ENCODE measurements at regions of chr17 and their contacts with region 1.

Region 1: GRCh38 chr17:38557836-38558727 is 47.7 kb downstream of the SRCIN1 start:
- DNase-seq: peak; percentile 62
- H3K4me3 ChIP-seq: peak overlapping the region; percentile 52
- H3K27ac ChIP-seq: no peak overlapping the region
- H3K27me3 ChIP-seq: peaks cover 70% of the 10 kb centered on the region
- CTCF ChIP-seq: peak; percentile 93

Region 2: DNA sequence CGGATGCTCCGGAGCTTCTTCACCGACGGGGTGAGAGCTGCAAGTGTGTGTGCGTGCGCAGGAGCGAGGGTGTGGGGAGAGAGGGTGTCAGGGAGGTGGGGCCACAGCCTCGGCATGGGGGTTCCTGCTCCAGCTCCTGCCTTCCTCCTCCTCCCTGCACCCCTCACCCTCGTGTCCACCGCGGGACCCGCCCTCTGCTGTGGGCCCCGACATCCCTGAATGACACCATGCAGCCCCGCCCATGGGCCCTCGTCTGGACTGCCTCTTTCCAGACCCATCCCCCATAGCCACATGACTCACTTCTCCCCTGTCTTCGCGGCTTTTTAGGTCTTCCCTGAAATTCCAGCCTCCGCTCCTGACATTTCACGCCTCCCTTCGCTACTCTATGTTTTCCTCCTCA is 88.2 kb before region 1 on chr17:
- CTCF ChIA-PET with region 1: no interaction called
- POLR2A ChIA-PET with region 1: no interaction called
- DNase-seq: no peak
- H3K4me3 ChIP-seq: no peak overlapping the region
- H3K27ac ChIP-seq: no peak overlapping the region
- H3K27me3 ChIP-seq: no peaks in the 10 kb centered on the region
- CTCF ChIP-seq: no peak

Region 3: DNA sequence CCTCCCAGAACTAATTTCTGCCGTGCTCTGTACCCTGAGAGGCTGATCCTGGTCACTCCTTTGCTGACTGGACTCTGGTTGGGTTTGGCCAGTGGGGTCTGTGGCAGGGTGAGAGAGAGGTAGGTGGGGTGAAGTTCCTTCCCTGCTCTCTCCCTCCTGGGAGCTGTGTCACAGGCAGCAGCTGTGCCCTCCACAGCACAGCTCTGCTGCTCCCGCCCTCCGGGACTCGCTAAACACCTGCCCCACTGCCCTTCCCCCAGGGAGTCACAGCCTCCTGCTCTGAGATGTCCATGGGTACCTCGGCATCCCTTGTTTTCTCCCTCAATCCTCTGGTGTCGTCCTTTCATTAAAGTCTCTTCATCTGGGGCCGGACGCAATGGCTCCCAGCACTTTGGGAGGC is 18.7 kb before region 1 on chr17:
- CTCF ChIA-PET with region 1: interaction called, 15 read pairs
- POLR2A ChIA-PET with region 1: no interaction called
- DNase-seq: no peak
- H3K4me3 ChIP-seq: no peak overlapping the region
- H3K27ac ChIP-seq: no peak overlapping the region
- H3K27me3 ChIP-seq: peaks cover 32% of the 10 kb centered on the region
- CTCF ChIP-seq: no peak

Region 4: DNA sequence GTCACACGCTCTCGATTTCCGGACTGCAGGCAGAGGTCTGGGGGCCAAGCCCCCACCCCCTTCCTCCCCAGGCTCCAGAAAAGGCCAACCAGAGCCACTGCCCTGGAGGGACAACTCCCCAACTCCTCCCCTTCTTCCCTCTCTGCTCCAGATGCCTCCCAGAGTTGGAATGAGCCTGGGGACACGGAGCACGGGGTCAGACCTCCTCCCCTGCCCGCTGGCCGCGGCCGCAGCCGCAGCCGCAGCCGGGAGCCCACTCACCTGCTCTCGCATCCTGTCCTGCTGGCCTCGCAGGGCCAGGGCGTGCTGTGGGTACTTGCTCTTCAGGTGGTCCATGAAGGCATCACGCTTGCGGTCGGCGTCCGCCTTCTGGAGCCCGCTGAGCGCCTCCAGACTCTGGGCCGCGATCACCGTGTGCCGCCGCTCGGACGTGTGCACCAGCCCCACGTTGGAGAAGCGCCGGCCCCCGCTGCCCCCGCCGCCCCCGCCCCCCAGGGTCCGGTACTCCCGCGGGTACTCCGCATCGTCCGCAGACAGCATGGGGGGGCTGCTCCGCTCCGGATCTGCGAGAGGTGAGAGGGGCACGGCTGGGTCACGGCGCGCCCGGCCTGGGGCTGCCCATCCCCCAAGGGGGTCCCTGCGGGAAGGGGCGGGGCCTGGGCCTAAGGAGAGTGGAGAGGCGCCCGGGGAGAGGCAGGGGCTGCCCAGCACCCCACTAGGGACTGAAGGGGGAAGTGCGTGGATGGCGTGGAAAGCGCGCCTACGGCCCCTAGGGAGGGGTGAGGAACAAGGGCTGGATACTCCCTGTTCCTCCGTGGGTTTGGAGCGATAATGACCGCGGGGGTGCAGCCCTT is 20.4 kb after region 1 on chr17:
- CTCF ChIA-PET with region 1: interaction called, 49 read pairs
- POLR2A ChIA-PET with region 1: interaction called, 3 read pairs
- DNase-seq: no peak
- H3K4me3 ChIP-seq: no peak overlapping the region
- H3K27ac ChIP-seq: no peak overlapping the region
- H3K27me3 ChIP-seq: peaks cover 70% of the 10 kb centered on the region
- CTCF ChIP-seq: no peak

Region 5: DNA sequence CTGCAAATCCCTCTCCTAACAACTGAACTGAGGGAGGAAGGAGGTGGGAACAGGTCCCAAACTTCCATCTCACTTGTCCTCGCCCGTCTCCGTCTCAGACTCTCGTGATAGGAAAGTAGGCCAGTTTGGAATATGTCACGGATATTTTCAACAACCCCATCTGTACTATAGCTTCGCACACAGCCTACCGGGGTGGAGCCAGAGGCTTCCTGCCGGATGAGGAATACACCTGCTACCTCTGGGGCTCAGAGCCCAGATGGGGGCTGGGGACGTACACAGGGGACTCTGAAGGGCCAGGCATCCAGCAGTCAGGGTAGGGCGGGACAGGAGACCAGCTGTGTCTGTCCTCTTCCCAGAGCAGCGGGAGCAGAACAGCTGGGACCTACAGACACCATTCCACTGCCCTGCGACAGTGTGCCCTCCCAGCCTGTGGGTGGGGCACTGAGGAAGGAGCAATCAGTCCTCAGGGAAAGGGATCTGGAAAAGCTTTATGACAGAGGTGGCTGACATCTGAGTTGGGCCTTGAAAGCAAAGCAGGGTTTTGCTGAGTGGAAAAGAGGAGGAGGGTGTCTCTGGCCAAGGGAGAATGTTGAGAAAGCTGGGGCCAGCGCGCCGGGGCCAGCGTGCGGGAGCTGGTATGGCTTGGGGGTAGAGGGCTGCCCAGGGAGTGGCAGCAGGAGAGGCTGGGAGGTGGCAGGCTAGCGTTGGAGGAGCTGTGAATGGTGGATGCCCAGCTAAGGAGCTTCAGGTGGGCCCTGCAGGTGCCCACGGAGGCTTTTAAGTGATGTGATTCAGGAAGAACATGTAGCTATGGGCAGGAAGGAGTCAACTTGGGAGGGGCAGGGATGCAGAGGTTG is 59.2 kb after region 1 on chr17:
- CTCF ChIA-PET with region 1: interaction called, 16 read pairs
- POLR2A ChIA-PET with region 1: no interaction called
- DNase-seq: no peak
- H3K4me3 ChIP-seq: no peak overlapping the region
- H3K27ac ChIP-seq: no peak overlapping the region
- H3K27me3 ChIP-seq: peaks cover 54% of the 10 kb centered on the region
- CTCF ChIP-seq: no peak

Region 6: DNA sequence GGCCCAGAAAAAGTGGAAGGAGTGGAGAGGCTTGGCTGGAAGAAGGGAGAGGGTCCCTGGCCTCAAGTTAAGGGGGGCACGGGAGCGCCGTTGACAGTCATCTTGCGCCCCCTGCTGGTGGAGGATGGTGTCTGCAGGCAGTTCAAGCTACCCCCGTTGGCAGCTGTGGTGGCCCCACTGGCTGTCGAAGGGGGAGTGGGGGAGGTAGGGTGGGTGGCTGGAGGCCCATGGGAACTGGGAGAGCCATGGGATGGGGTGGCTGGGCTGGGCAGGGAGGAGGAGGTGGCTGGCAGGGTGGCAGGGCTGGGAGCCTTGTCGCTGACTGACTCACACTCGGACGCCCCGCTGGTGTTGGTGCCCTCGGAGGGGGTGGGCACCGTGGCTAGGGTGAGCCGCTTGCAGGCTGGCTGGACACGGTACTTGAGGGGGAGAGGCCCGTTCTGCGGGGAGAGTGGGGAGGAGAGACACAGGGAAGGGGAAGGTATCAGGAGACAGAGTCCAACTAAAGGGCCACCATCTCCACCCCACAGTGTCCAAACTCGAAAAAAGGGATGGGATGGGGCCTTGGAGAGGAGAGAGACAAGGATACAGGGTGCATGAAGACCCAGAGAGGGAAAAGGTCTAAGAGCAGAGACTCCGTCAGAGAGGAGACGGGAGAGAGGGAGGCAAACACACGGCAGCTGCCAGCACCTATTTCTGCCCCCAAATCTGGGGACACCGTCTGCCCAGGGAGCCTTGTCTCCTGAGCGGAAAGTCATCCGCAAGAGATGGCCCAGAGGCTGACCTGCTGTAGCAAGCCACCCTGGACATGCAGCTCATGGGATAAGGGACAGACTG is 177.3 kb after region 1 on chr17:
- CTCF ChIA-PET with region 1: interaction called, 8 read pairs
- POLR2A ChIA-PET with region 1: interaction called, 10 read pairs
- DNase-seq: no peak
- H3K4me3 ChIP-seq: no peak overlapping the region
- H3K27ac ChIP-seq: no peak overlapping the region
- H3K27me3 ChIP-seq: no peaks in the 10 kb centered on the region
- CTCF ChIP-seq: peak; percentile 90